Activated CD8-positive, alpha-beta memory T cell treated with anti-CD3 and anti-CD28 coated beads, Interleukin-2, amount 10 ng/mL, durations not matched to agents 7 days and 5 days (primary cell): ENCODE measurements at regions of chr3 and their contacts with region 1.

Region 1: GRCh38 chr3:184250167-184250828 is 826 bp downstream of the EEF1AKMT4 start:
- DNase-seq: peak; percentile 95
- ATAC-seq: peak; percentile 65
- H3K4me3 Mint-ChIP-seq: peak overlapping the region; percentile 85
- H3K27ac Mint-ChIP-seq: peak overlapping the region; percentile 90
- H3K4me1 Mint-ChIP-seq: peaks cover 6% of the 10 kb centered on the region
- H3K27me3 Mint-ChIP-seq: no peaks in the 10 kb centered on the region

Region 2: GRCh38 chr3:184145111-184145524 is 105.2 kb before region 1 on chr3:
- CTCF ChIA-PET with region 1: interaction called, 15 read pairs
- DNase-seq: no peak
- ATAC-seq: no peak
- H3K4me3 Mint-ChIP-seq: no peak overlapping the region
- H3K27ac Mint-ChIP-seq: no peak overlapping the region
- H3K4me1 Mint-ChIP-seq: peaks cover 1% of the 10 kb centered on the region
- H3K27me3 Mint-ChIP-seq: no peaks in the 10 kb centered on the region

Region 3: GRCh38 chr3:184235381-184236032 is 14.8 kb before region 1 on chr3:
- CTCF ChIA-PET with region 1: interaction called, 42 read pairs
- DNase-seq: no peak
- ATAC-seq: no peak
- H3K4me3 Mint-ChIP-seq: no peak overlapping the region
- H3K27ac Mint-ChIP-seq: no peak overlapping the region
- H3K4me1 Mint-ChIP-seq: peaks cover 4% of the 10 kb centered on the region
- H3K27me3 Mint-ChIP-seq: peaks cover 22% of the 10 kb centered on the region

Region 4: DNA sequence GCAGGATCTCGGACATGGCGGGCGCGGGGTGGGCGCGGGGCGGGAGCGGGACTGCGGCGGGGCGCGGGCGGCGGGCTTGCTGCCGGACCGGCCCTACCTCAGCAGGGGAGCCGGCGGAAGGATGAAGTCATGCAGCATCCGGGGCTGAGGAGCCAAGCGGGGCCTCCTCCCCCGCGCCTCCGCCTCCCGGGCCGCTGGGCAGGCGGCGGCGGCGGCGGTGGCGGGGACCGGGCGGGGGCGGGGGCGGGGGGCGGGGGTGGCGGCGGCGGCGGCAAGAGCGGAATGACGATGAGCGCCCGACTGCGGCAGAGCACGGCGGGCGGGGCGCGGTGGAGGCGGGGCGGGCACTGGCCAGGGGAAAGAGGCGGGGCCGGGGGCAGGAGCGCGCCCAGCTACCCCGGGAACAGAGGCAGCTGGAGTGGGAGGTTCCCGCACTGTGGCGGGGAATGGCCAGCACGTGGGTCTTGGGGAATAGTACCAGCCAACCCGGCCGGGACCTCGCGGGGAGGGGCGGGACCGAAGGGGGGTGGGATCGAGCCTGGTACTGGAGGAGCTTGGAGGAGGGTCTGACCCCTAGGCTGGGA is 11.1 kb after region 1 on chr3 and contains the start of gene CAMK2N2:
- CTCF ChIA-PET with region 1: interaction called, 14 read pairs
- DNase-seq: peak; percentile 64
- ATAC-seq: peak; percentile 70
- H3K4me3 Mint-ChIP-seq: peak within 1 kb of the TSS; percentile 75
- H3K27ac Mint-ChIP-seq: peak within 1 kb of the TSS; percentile 1
- H3K4me1 Mint-ChIP-seq: peaks cover 18% of the 10 kb centered on the region
- H3K27me3 Mint-ChIP-seq: peaks cover 43% of the 10 kb centered on the region
- total RNA-seq, gene CAMK2N2: 0.20 to 0.37 TPM

Region 5: DNA sequence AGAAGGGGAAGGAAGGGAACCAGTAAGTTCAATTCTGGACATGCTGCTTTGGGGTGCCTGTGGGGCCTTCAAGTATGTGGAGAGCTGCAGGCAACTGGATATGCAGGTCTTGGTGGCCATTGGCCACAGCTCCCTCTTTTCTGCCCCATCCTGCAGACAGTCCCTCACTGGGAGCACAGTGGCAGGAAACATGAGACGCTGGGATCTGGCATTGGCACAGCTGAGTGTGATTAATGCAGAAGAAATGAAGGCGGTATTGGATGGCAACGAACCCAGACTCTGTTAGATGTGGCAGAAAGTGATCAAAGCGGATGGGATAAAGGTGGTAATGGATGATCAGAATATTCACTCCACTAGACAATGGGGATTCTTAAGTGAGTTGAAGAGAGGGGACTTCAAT is 538.5 kb after region 1 on chr3:
- CTCF ChIA-PET with region 1: no interaction called
- DNase-seq: no peak
- ATAC-seq: no peak
- H3K4me3 Mint-ChIP-seq: no peak overlapping the region
- H3K27ac Mint-ChIP-seq: no peak overlapping the region
- H3K4me1 Mint-ChIP-seq: peaks cover 29% of the 10 kb centered on the region
- H3K27me3 Mint-ChIP-seq: peaks cover 27% of the 10 kb centered on the region